Left ventricle myocardium superior (tissue), 1 donor: ENCODE measurements at regions of chr3 and their contacts with region 1.

Region 1: GRCh38 chr3:23202921-23203707 is at the start of gene UBE2E2:
- DNase-seq: peak; percentile 89
- ATAC-seq: peak; percentile 90
- total RNA-seq, gene UBE2E2: 38.3 TPM

Region 2: DNA sequence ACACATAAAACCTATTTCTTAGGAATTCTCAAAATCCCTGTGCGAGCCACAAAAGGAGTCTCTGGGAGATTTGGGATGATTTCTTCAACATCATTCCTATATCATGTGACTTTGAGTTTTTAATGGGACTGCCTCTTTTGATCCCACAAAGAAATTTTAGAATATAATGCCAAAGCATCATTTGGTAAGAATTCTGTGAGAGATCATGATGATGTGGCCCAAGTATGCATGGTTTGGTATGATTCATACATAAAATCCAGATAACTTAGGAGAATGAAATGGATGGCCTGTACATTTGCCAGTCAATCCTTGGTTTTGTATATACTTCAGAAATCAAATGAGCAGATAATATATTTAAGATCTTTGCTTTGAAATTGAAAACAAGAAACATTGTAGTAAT is 61.3 kb after region 1 on chr3:
- intact Hi-C with region 1: no loop called
- DNase-seq: no peak
- ATAC-seq: no peak

Region 3: DNA sequence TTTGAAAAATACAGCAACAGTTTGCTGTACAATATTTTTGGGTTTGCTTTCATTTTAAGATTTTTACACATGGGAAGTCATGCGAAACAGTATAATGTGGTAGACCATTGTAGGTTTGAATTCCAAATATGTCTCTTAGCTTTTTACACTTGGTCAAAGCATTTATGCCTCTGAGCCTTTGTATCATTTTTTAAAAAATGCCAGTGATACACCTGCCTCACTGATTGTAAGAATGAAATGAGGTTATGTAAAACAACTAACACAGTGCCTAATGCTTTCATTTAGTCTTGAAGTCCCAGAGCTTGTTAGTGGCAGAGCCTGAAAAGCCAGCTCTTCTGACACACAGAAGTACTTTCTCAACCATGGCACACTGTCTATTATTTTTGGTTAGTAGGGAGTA is 202.0 kb after region 1 on chr3:
- intact Hi-C with region 1: loop called (anchors 5 kb)
- DNase-seq: no peak
- ATAC-seq: no peak

Region 4: DNA sequence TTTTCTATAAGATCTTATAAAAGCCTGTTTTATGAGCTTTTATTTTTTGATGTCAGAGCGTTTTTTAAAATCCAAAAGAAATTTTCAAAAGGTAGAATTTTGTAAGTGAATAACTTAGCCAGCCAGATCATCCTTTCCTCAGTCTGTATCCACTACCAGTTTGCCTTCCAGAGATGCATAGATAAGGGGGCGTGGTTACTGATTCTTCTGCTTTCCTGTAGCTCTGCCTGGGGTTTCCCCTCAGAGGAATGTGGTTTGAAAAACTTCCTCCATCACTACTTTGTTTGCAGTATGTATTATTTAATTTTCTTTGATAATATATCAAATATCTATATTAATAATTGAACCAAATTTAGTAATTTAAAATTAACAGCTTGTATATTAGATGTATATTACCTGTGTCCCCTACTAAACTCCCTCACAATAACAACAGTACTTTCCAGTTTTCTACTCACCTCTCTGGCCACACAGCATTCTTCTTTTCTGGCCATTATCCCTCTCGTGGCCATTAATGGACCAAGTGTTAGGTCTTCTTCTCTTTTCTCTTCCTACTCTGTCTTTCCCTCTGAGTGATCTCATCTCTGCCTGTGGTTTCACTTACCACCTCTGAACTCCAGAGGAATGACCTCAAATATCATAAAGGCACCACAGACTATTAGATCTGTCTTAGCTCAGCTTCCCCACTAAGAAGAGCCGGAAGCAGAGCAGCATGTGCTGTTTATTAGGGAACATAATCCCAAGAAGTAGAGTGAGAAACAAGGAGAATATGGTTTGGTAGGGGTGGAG is 239.7 kb after region 1 on chr3:
- intact Hi-C with region 1: no loop called
- DNase-seq: no peak
- ATAC-seq: no peak